ENCODE measurements at regions of chr9 and their contacts with region 1.

Region 1: DNA sequence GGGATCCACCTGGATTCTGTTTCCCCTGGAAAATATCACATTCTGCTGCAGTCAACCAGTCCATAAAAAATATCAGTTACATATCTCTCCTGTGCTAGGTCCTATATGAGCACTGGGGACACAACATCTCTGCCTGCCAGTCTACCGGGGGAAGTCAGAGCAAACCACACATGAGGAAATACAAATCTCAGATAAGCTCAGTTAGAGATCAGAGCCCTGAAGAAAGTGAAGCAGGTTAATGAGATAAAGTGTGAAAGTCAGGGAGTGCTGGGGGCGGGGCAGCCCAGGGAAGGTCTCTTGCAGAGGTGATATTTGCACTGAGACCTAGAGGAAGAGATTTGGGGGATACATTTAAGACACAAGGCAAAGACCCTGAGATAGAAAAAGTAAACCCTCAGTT is 67.8 kb upstream of the SLC1A1 start:
- DNase-seq: no peak
- H3K4me3 ChIP-seq: no peak overlapping the region
- H3K27ac ChIP-seq: no peak overlapping the region
- H3K4me1 ChIP-seq: no peaks in the 10 kb centered on the region
- H3K27me3 ChIP-seq: no peaks in the 10 kb centered on the region
- CTCF ChIP-seq: no peak
- POLR2A ChIP-seq: no peak

Region 2: DNA sequence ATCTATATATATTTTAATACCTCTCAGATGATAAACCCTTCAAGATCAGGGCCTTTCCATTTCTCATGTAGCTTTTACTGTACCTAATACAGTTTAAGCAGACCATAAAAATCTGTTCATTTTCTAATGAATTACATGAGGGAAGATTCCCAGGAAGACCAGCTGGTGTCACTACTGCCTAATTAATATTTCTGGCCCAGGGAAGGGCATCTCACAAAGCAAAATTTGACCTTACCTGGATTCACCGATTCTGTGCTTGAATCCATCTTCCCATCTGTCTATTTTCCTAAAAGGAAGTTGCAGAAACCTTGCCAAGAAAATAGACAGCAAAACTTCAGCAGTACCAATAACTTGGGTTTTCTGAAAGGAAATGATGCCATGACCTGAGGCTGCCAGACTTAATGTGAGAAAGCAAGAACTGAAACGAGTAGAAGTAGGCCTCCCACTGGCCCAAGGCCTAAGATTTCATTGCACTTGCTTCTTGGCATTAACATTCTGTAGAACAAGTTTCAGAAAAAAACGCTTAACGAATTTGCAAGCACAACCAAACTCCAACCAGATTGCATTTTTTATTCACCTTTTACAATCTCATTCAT is 39.7 kb before region 1 on chr9:
- intact Hi-C with region 1: no loop called
- DNase-seq: peak in 1 of 7 donors; percentile 7
- H3K4me3 ChIP-seq: no peak overlapping the region
- H3K27ac ChIP-seq: no peak overlapping the region
- H3K4me1 ChIP-seq: no peaks in the 10 kb centered on the region
- H3K27me3 ChIP-seq: no peaks in the 10 kb centered on the region
- CTCF ChIP-seq: peak; percentile 17 to 62 (median 60)
- POLR2A ChIP-seq: no peak

Region 3: GRCh38 chr9:4489919-4490704 is 67.6 kb after region 1 on chr9 and contains the start of gene SLC1A1:
- intact Hi-C with region 1: loop called in 1 of 2 experiments (anchors 10 kb)
- DNase-seq: peak; percentile 42 to 75 (median 61)
- H3K4me3 ChIP-seq: peak within 1 kb of the TSS; percentile 9 to 49 (median 38)
- H3K27ac ChIP-seq: peak within 1 kb of the TSS in 4 of 5 donors; percentile 16 to 67 (median 45)
- H3K4me1 ChIP-seq: peaks cover 12 to 13% of the 10 kb centered on the region in 2 donors
- H3K27me3 ChIP-seq: no peaks in the 10 kb centered on the region
- CTCF ChIP-seq: no peak
- POLR2A ChIP-seq: peak in 1 of 2 donors; percentile 39
- total RNA-seq, gene SLC1A1: 0.68 to 4.8 (median 1.8) TPM

Measured in adrenal gland (tissue), 19 donors.